Mammary epithelial cell (primary cell): ENCODE measurements at regions of chr12 and their contacts with region 1.

Region 1: GRCh38 chr12:54958048-54958658 is 26.4 kb downstream of the TESPA1 start:
- DNase-seq: peak; percentile 50
- H3K4me3 ChIP-seq: no peak overlapping the region
- H3K27ac ChIP-seq: no peak overlapping the region
- H3K4me1 ChIP-seq: no peaks in the 10 kb centered on the region
- H3K27me3 ChIP-seq: no peaks in the 10 kb centered on the region
- CTCF ChIP-seq: peak; percentile 50 to 70

Region 2: GRCh38 chr12:54463034-54463433 is 495.1 kb before region 1 on chr12:
- CTCF ChIA-PET with region 1: no interaction called
- dilution Hi-C with region 1: no loop called
- in situ Hi-C with region 1: no loop called
- intact Hi-C with region 1: no loop called
- DNase-seq: peak; percentile 71
- H3K4me3 ChIP-seq: no peak overlapping the region
- H3K27ac ChIP-seq: no peak overlapping the region
- H3K4me1 ChIP-seq: no peaks in the 10 kb centered on the region
- H3K27me3 ChIP-seq: peaks cover 2% of the 10 kb centered on the region
- CTCF ChIP-seq: no peak

Region 3: DNA sequence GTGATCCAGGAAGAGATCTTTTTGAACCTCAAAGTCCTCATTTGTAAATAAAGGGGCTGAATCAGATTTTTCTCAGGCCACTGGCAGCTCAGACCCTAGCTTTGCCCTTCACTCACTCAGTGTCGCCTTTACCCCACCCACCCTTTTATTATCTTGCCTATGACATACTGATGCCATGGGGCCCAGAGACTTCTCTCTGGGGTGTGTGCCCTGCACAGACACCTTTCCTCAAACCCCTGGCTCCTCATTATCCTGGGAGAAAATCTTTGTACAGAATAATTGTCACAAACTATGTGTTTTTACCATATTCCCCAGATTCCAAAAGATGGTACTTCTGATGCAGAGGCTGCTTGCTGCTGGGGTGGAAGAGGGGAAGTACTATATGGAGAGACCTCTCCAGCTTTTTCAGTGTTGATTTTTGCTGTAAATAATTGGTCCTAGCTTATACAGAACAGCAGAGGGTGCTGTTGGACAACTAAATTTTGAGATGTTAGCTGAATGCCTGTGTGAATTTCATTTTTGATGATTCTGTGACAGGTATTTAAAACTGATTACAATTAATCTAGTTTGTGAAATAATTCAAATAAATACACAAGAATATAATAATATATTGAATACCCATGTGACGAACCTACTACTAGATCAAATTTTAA is 256.1 kb before region 1 on chr12:
- CTCF ChIA-PET with region 1: no interaction called
- dilution Hi-C with region 1: no loop called
- in situ Hi-C with region 1: no loop called
- intact Hi-C with region 1: loop called (anchors 2 kb)
- DNase-seq: peak; percentile 12
- H3K4me3 ChIP-seq: no peak overlapping the region
- H3K27ac ChIP-seq: no peak overlapping the region
- H3K4me1 ChIP-seq: no peaks in the 10 kb centered on the region
- H3K27me3 ChIP-seq: no peaks in the 10 kb centered on the region
- CTCF ChIP-seq: peak; percentile 51 to 61

Region 4: GRCh38 chr12:54749191-54749818 is 208.8 kb before region 1 on chr12:
- CTCF ChIA-PET with region 1: no interaction called
- dilution Hi-C with region 1: no loop called
- in situ Hi-C with region 1: loop called (anchors 10 kb)
- intact Hi-C with region 1: loop called (anchors 2 kb)
- DNase-seq: peak; percentile 28
- H3K4me3 ChIP-seq: no peak overlapping the region
- H3K27ac ChIP-seq: no peak overlapping the region
- H3K4me1 ChIP-seq: no peaks in the 10 kb centered on the region
- H3K27me3 ChIP-seq: no peaks in the 10 kb centered on the region
- CTCF ChIP-seq: peak; percentile 66 to 76

Region 5: DNA sequence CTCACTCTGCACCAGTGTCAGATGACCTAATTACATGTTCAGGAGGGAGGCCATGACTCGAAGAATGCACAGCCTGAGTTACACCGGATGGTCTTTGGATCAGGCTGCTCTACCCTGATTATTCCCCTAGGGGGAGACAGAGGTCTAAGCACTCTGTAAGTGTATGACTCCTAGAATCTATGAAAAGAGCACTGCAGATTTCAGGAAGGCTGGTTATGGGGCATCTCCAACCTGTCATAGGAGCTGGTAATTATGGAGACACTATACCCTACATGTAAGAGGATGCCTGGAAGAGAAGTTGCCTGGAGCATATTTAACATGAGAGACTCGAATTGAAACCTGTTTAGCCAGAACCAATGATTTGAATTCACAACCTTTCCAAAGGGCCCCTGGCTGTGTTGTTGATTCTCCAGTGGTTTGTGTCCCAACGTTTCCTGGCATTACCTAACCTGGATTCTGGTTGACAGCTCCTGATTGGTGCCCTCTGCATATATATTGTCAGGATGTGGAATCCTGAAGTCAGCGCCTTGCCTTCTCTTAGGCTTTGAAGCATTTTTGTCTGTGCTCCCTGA is 104.1 kb before region 1 on chr12 and contains the start of gene MUCL1:
- CTCF ChIA-PET with region 1: no interaction called
- dilution Hi-C with region 1: loop called (anchors 5 kb)
- in situ Hi-C with region 1: loop called (anchors 5 kb)
- intact Hi-C with region 1: loop called (anchors 1 kb)
- DNase-seq: peak; percentile 71
- H3K4me3 ChIP-seq: no peak within 1 kb of the TSS
- H3K27ac ChIP-seq: no peak within 1 kb of the TSS
- H3K4me1 ChIP-seq: no peaks in the 10 kb centered on the region
- H3K27me3 ChIP-seq: no peaks in the 10 kb centered on the region
- CTCF ChIP-seq: peak; percentile 93 to 96
- total RNA-seq, gene MUCL1: not detected

Region 6: GRCh38 chr12:55008944-55009585 is 50.9 kb after region 1 on chr12:
- CTCF ChIA-PET with region 1: no interaction called
- dilution Hi-C with region 1: no loop called
- in situ Hi-C with region 1: no loop called
- intact Hi-C with region 1: no loop called
- DNase-seq: no peak
- H3K4me3 ChIP-seq: no peak overlapping the region
- H3K27ac ChIP-seq: no peak overlapping the region
- H3K4me1 ChIP-seq: no peaks in the 10 kb centered on the region
- H3K27me3 ChIP-seq: peaks cover 4% of the 10 kb centered on the region
- CTCF ChIP-seq: no peak

Region 7: GRCh38 chr12:55407866-55408265 is 449.7 kb after region 1 on chr12:
- CTCF ChIA-PET with region 1: no interaction called
- dilution Hi-C with region 1: no loop called
- in situ Hi-C with region 1: no loop called
- intact Hi-C with region 1: no loop called
- DNase-seq: no peak
- H3K4me3 ChIP-seq: no peak overlapping the region
- H3K27ac ChIP-seq: no peak overlapping the region
- H3K4me1 ChIP-seq: no peaks in the 10 kb centered on the region
- H3K27me3 ChIP-seq: no peaks in the 10 kb centered on the region
- CTCF ChIP-seq: no peak